ENCODE measurements at regions of chrX and their contacts with region 1.

Region 1: DNA sequence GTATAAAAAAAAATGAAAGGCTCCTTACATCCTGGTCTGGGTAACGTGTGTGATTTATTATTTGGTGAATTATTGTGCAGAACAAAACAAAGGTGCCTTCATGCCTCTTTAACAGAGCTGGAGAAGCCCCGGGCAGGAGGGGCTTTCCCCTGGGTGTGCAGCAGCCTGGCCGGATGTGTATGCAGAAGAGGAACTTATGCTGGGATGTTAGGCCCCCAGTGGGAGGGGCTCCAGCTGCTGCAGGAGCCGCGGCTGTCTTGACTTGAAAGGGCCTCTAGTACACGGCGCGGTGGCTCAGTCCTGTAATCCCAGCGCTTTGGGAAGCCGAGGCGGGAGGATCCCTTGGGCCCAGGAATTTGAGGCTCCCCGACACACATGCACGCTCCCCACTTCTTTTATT is 16.0 kb downstream of the CCNQ start:
- DNase-seq: peak; percentile 23
- ATAC-seq: peak; percentile 100
- H3K4me3 ChIP-seq: no peak overlapping the region
- H3K27ac ChIP-seq: no peak overlapping the region
- H3K4me1 ChIP-seq: no peaks in the 10 kb centered on the region
- H3K27me3 ChIP-seq: no peaks in the 10 kb centered on the region
- CTCF ChIP-seq: no peak
- EP300 ChIP-seq: no peak
- POLR2A ChIP-seq: no peak
- RAD21 ChIP-seq: no peak

Region 2: GRCh38 chrX:153521034-153521433 is 61.9 kb before region 1 on chrX:
- CTCF ChIA-PET with region 1: no interaction called
- POLR2A ChIA-PET with region 1: no interaction called
- RAD21 ChIA-PET with region 1: no interaction called
- SMC1A ChIA-PET with region 1: no interaction called
- in situ Hi-C with region 1: loop called (anchors 10 kb)
- intact Hi-C with region 1: no loop called
- DNase-seq: no peak
- ATAC-seq: no peak
- H3K4me3 ChIP-seq: no peak overlapping the region
- H3K27ac ChIP-seq: no peak overlapping the region
- H3K4me1 ChIP-seq: no peaks in the 10 kb centered on the region
- H3K27me3 ChIP-seq: no peaks in the 10 kb centered on the region
- CTCF ChIP-seq: no peak
- EP300 ChIP-seq: no peak
- POLR2A ChIP-seq: no peak
- RAD21 ChIP-seq: no peak

Region 3: GRCh38 chrX:153569475-153569874 is 13.4 kb before region 1 on chrX:
- CTCF ChIA-PET with region 1: no interaction called
- POLR2A ChIA-PET with region 1: no interaction called
- RAD21 ChIA-PET with region 1: no interaction called
- SMC1A ChIA-PET with region 1: no interaction called
- in situ Hi-C with region 1: no loop called
- intact Hi-C with region 1: no loop called
- DNase-seq: no peak
- ATAC-seq: no peak
- H3K4me3 ChIP-seq: no peak overlapping the region
- H3K27ac ChIP-seq: no peak overlapping the region
- H3K4me1 ChIP-seq: no peaks in the 10 kb centered on the region
- H3K27me3 ChIP-seq: no peaks in the 10 kb centered on the region
- CTCF ChIP-seq: no peak
- EP300 ChIP-seq: no peak
- POLR2A ChIP-seq: no peak
- RAD21 ChIP-seq: no peak

Region 4: DNA sequence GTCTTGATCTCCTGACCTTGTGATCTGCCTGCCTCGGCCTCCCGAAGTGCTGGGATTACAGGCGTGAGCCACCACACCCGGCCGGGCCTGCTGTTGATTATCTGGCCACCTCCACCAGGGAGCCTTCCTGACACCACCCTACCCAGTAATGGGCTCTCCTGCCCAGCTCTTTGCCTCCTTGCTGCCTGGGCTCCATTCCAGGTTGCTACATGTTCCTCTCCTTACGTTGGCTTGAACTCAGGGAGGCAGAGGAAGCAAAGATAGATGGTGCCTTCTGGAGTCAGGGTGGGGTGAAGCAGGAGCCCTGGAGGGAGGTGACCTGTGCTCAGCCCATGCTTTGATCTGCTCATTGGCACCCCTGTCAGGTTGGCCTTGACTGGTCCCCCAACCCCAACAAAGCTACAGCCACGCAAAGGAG is 765.2 kb after region 1 on chrX:
- CTCF ChIA-PET with region 1: no interaction called
- POLR2A ChIA-PET with region 1: no interaction called
- RAD21 ChIA-PET with region 1: no interaction called
- SMC1A ChIA-PET with region 1: no interaction called
- in situ Hi-C with region 1: no loop called
- intact Hi-C with region 1: no loop called
- DNase-seq: no peak
- ATAC-seq: no peak
- H3K4me3 ChIP-seq: no peak overlapping the region
- H3K27ac ChIP-seq: no peak overlapping the region
- H3K4me1 ChIP-seq: no peaks in the 10 kb centered on the region
- H3K27me3 ChIP-seq: no peaks in the 10 kb centered on the region
- CTCF ChIP-seq: no peak
- EP300 ChIP-seq: no peak
- POLR2A ChIP-seq: no peak
- RAD21 ChIP-seq: no peak